ENCODE measurements at regions of chr10 and their contacts with region 1.

Region 1: DNA sequence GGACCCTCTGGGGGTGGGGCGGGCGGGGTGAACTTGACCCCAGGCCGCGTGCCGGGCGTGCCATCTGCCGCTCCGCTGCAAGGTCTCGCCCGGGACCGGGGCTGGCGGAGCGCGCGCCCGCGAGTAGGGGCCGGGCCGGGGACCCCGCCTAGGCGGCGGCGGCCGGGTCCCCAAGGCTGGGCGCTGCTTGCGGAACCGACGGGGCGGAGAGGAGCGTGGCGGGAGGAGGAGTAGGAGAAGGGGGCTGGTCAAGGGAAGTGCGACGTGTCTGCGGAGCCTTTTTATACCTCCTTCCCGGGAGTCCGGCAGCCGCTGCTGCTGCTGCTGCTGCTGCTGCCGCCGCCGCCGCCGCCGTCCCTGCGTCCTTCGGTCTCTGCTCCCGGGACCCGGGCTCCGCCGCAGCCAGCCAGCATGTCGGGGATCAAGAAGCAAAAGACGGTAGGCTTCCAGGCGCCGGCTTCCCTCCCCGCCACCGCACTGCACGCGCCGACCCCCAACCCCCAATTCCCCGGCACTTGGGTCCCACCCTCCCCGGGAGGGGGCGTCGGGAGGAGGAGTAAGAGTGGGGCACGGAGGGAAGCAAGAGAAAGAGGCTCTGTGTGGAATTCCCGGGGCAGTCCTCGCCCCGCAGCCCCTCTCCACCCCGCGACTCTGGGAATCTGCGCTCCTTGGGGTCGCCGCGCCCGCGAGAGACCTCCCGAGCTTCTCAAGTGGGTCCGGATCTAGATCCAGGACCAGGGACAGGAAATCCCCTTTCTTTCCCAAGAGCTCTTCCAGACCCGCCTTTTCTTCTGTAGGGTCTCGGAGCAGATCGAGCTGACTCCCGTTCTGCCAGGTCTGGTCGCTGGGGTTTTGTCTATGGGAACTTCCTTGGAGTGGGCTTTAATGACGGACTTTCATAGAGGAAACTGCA is at the start of gene PAPSS2:
- DNase-seq: peak; percentile 74
- H3K4me3 ChIP-seq: peak within 1 kb of the TSS; percentile 51 to 95 (median 58)
- H3K27ac ChIP-seq: peak within 1 kb of the TSS; percentile 77 to 91 (median 80)
- H3K4me1 ChIP-seq: peaks cover 3 to 46% (median 13%) of the 10 kb centered on the region in 4 donors
- H3K27me3 ChIP-seq: no peaks in the 10 kb centered on the region
- CTCF ChIP-seq: peak in 1 of 5 experiments; percentile 10
- EP300 ChIP-seq: no peak
- POLR2A ChIP-seq: peak; percentile 62
- total RNA-seq, gene PAPSS2: 17.3 to 117 (median 88.4) TPM

Region 2: DNA sequence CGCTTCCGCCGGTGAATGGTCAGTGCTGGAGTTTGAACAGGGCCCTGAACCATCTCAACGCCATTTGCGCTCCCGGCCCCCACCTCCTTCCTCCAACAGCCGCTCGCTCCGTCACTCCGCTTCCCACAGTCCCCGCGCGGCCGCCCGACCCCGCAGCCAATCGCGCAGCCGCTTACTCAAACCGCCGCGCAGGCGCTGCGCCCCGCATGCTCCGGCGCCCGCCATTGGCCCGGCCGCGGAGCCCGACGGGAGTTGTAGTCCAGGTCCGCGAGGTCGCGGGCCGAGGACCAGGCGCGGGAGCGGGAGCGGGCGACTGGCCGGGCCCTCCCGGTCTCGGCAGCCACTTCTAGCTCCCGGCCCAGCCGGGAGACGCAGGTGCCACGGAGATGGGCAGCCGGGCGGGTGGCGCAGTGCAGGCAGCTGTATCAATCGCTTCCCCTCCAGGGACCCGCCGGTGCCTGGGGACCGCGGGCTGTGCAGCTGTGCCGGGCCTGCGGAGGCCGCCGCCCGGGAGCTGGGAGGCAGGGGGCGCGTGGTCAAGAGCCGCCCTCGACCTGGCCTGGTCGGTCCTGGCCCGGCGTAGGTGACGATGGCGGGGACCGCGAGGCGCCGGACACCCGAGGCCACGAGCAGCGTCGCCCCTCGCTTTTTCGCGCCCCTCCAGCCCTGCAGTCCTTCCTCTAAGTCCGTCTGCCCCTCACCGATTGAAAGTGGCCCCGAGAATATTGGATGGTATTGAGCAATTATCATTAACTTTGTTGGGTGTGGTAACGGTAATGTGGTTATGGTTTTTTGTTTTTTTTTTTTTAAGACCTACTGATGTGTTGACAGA is 1137.9 kb before region 1 on chr10 and contains the start of gene WAPL:
- in situ Hi-C with region 1: no loop called
- intact Hi-C with region 1: no loop called
- DNase-seq: peak; percentile 96
- H3K4me3 ChIP-seq: peak within 1 kb of the TSS; percentile 67 to 99 (median 85)
- H3K27ac ChIP-seq: peak within 1 kb of the TSS; percentile 95 to 99 (median 96)
- H3K4me1 ChIP-seq: peaks cover 15 to 50% (median 35%) of the 10 kb centered on the region in 4 donors
- H3K27me3 ChIP-seq: no peaks in the 10 kb centered on the region
- CTCF ChIP-seq: peak in 1 of 5 experiments; percentile 15
- EP300 ChIP-seq: no peak
- POLR2A ChIP-seq: peak; percentile 84
- total RNA-seq, gene WAPL: 26.6 to 71.4 (median 41.0) TPM

Region 3: DNA sequence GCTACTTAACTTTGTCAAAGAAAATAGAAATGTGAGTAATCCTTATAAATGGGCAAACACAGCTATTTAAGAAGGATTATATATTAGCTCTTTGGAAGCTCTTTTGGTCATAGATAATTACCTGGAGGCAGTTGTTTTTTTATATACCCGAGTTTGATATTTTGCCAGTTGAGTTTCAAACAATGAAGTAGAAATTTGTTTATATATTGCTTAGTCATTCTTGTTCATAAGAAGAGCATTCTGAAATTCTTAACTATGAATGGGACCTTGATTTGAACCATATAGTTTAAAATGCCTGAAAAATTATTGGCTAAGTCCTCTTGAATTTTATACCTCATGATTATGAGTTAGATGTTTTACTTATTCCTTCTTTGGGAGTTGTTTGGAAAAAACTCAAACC is 118.7 kb before region 1 on chr10:
- in situ Hi-C with region 1: no loop called
- intact Hi-C with region 1: no loop called
- DNase-seq: no peak
- H3K4me3 ChIP-seq: no peak overlapping the region
- H3K27ac ChIP-seq: no peak overlapping the region
- H3K4me1 ChIP-seq: no peaks in the 10 kb centered on the region
- H3K27me3 ChIP-seq: no peaks in the 10 kb centered on the region
- CTCF ChIP-seq: no peak
- EP300 ChIP-seq: no peak
- POLR2A ChIP-seq: no peak

Region 4: GRCh38 chr10:87723500-87723899 is 63.7 kb after region 1 on chr10:
- in situ Hi-C with region 1: loop called in 1 of 4 experiments (anchors 10 kb)
- intact Hi-C with region 1: no loop called
- DNase-seq: no peak
- H3K4me3 ChIP-seq: no peak overlapping the region
- H3K27ac ChIP-seq: peak overlapping the region; percentile 58 to 79 (median 75)
- H3K4me1 ChIP-seq: peaks cover 0 to 26% (median 18%) of the 10 kb centered on the region in 4 donors
- H3K27me3 ChIP-seq: no peaks in the 10 kb centered on the region
- CTCF ChIP-seq: no peak
- EP300 ChIP-seq: no peak
- POLR2A ChIP-seq: no peak

Region 5: DNA sequence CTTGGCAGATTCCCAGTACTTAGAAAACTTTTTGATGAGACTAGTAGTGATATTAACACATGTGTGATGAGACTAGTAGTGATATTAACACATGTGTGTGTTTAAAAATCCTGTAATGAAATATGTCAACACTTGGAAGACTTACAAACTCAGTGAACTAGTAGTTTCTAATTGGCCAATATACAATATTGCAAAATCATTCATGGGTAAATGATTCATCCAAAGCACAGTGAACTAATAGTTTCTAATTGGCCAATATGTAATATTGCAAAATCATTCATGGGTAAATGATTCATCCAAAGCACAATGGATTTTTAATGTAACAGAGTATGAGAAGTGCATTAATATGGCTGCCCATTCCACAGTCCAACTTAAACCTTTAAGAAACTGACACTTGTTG is 80.4 kb after region 1 on chr10:
- in situ Hi-C with region 1: no loop called
- intact Hi-C with region 1: loop called (anchors 10 kb)
- DNase-seq: no peak
- H3K4me3 ChIP-seq: no peak overlapping the region
- H3K27ac ChIP-seq: no peak overlapping the region
- H3K4me1 ChIP-seq: no peaks in the 10 kb centered on the region
- H3K27me3 ChIP-seq: no peaks in the 10 kb centered on the region
- CTCF ChIP-seq: no peak
- EP300 ChIP-seq: no peak
- POLR2A ChIP-seq: no peak